ENCODE measurements at regions of chr17 and their contacts with region 1.

Region 1: GRCh38 chr17:4565209-4566141 is 5.1 kb upstream of the GGT6 start:
- DNase-seq: peak in 1 of 2 donors; percentile 45
- H3K4me3 ChIP-seq: no peak overlapping the region
- H3K27ac ChIP-seq: peak overlapping the region in 1 of 2 donors; percentile 20
- H3K4me1 ChIP-seq: no peaks in the 10 kb centered on the region
- H3K27me3 ChIP-seq: no peaks in the 10 kb centered on the region
- CTCF ChIP-seq: peak; percentile 45 to 70 (median 66)
- POLR2A ChIP-seq: no peak

Region 2: GRCh38 chr17:4420692-4421131 is 144.8 kb before region 1 on chr17:
- intact Hi-C with region 1: loop called (anchors 10 kb)
- DNase-seq: peak in 1 of 2 donors; percentile 37
- H3K4me3 ChIP-seq: no peak overlapping the region
- H3K27ac ChIP-seq: no peak overlapping the region
- H3K4me1 ChIP-seq: no peaks in the 10 kb centered on the region
- H3K27me3 ChIP-seq: no peaks in the 10 kb centered on the region
- CTCF ChIP-seq: peak; percentile 61 to 87 (median 78)
- POLR2A ChIP-seq: no peak

Region 3: GRCh38 chr17:4610162-4610561 is 44.7 kb after region 1 on chr17:
- intact Hi-C with region 1: loop called (anchors 10 kb)
- DNase-seq: no peak
- H3K4me3 ChIP-seq: no peak overlapping the region
- H3K27ac ChIP-seq: no peak overlapping the region
- H3K4me1 ChIP-seq: no peaks in the 10 kb centered on the region
- H3K27me3 ChIP-seq: no peaks in the 10 kb centered on the region
- CTCF ChIP-seq: no peak
- POLR2A ChIP-seq: no peak

Measured in breast epithelium (tissue), 4 donors.